Panc1 (cell line): ENCODE measurements at regions of chr17 and their contacts with region 1.

Region 1: DNA sequence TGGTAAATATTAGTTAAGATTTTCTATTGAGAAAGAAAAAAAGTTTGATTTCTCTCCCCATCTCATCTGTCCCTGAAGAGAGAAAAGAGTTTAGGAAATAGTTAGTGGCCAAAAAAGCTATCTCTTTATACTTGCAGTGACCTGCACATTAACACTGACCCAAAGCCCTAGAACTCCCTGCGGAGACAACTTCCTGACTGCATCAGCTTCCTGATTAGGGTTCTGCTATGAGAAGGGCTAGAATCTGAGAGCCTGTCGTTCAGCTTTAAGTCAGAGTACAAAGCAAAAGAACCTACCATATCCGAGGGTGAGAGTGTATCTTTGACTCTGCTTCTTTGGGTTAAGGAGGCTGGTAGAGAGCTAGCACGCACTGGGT is 24.7 kb downstream of the LIMD2 start:
- DNase-seq: no peak
- ATAC-seq: peak; percentile 26; the same call in 1 of the 2 replicates
- H3K4me3 ChIP-seq: no peak overlapping the region
- H3K27ac ChIP-seq: peak overlapping the region; percentile 51
- H3K4me1 ChIP-seq: peaks cover 10% of the 10 kb centered on the region
- H3K27me3 ChIP-seq: no peaks in the 10 kb centered on the region
- CTCF ChIP-seq: no peak

Region 2: GRCh38 chr17:63587770-63588169 is 87.4 kb before region 1 on chr17:
- CTCF ChIA-PET with region 1: no interaction called
- POLR2A ChIA-PET with region 1: no interaction called
- in situ Hi-C with region 1: no loop called
- intact Hi-C with region 1: no loop called
- DNase-seq: no peak
- ATAC-seq: no peak
- H3K4me3 ChIP-seq: no peak overlapping the region
- H3K27ac ChIP-seq: no peak overlapping the region
- H3K4me1 ChIP-seq: no peaks in the 10 kb centered on the region
- H3K27me3 ChIP-seq: no peaks in the 10 kb centered on the region
- CTCF ChIP-seq: no peak

Region 3: GRCh38 chr17:63694229-63694949 is 19.2 kb after region 1 on chr17:
- CTCF ChIA-PET with region 1: interaction called, 3 read pairs
- POLR2A ChIA-PET with region 1: interaction called, 17 read pairs
- in situ Hi-C with region 1: no loop called
- intact Hi-C with region 1: no loop called
- DNase-seq: no peak
- ATAC-seq: no peak
- H3K4me3 ChIP-seq: no peak overlapping the region
- H3K27ac ChIP-seq: no peak overlapping the region
- H3K4me1 ChIP-seq: no peaks in the 10 kb centered on the region; the same call in 1 of the 2 replicates
- H3K27me3 ChIP-seq: no peaks in the 10 kb centered on the region
- CTCF ChIP-seq: no peak